Left cardiac atrium (tissue), 4 donors: ENCODE measurements at regions of chr19 and their contacts with region 1.

Region 1: GRCh38 chr19:17282488-17283255 is 971 bp downstream of the ANKLE1 start:
- DNase-seq: peak; percentile 85
- ATAC-seq: peak; percentile 95 to 96

Region 2: GRCh38 chr19:17205237-17206140 is 77.2 kb before region 1 on chr19:
- intact Hi-C with region 1: loop called in 1 of 2 experiments (anchors 10 kb)
- DNase-seq: peak; percentile 55
- ATAC-seq: peak; percentile 48 to 64

Region 3: DNA sequence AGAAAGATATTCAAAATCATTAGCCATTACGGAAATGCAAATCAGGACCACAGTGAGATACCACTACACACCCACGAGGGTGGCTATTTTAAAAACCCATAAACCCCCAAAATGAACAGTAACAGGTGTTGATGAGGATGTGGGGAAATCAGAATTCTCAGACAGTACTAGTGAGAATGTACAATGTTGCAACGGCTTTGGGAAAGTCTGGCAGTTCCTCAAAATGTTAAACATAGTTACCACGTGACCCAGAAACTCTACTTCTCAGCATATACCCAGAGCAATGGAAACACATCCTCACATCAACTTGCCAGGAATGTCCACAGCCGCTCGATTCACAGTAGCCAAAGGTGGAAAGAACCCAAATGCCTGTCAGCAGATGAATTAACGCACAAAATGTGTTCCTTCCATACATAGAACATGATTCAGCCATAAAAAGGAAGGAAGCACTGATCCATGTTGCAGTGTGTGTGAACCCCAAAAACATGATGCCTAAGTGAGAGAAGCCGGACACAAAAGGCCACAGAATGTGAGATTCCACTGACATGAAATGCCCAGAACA is 87.4 kb after region 1 on chr19:
- intact Hi-C with region 1: no loop called
- DNase-seq: no peak
- ATAC-seq: peak; percentile 65 to 75